HCT116 (cell line): ENCODE measurements at regions of chr15 and their contacts with region 1.

Region 1: GRCh38 chr15:37995461-37996347 is 61.3 kb downstream of the TMCO5A start:
- DNase-seq: peak; percentile 45
- ATAC-seq: peak; percentile 78
- H3K4me3 ChIP-seq: no peak overlapping the region
- H3K27ac ChIP-seq: no peak overlapping the region
- H3K4me1 ChIP-seq: no peaks in the 10 kb centered on the region
- H3K27me3 ChIP-seq: 0 out of 2 replicates have a peak, but pooled peaks cover 13% of the 10 kb centered on the region
- CTCF ChIP-seq: peak; percentile 42 to 76 (median 49); a peak in 4 of 6 replicates
- POLR2A ChIP-seq: no peak
- RAD21 ChIP-seq: peak; percentile 74

Region 2: DNA sequence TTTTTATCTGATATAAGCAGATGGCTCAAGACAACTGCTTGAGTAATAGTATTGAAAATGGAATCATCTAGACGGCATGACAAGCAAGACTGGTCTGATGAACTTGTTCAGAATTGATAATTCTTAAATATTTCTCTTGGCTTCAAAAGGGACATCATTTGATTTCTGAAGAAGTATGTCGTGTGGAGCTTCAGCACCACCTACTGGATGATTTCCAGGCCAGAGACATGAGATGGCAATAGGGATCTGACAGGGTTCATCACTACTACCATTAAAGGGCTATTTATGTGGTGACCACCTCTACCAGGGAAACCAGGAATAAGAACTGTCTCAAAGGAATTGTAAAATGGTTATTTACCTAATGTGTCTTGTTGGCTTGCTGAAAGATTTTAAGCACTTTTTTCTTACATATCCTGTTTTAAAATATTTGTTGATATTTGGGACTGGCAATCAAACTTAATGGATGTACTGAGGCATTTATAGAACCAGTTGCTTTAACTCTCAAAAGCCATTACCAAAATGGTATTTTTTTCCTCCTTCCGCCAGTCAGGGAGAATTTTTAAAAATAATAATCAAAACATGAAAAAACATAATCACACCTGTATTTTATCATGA is 358.7 kb after region 1 on chr15:
- CTCF ChIA-PET with region 1: interaction called, 9 read pairs
- POLR2A ChIA-PET with region 1: interaction called, 3 read pairs
- RAD21 ChIA-PET with region 1: no interaction called
- intact Hi-C with region 1: loop called (anchors 2 kb)
- DNase-seq: peak; percentile 65
- ATAC-seq: peak; percentile 78
- H3K4me3 ChIP-seq: no peak overlapping the region
- H3K27ac ChIP-seq: no peak overlapping the region
- H3K4me1 ChIP-seq: no peaks in the 10 kb centered on the region
- H3K27me3 ChIP-seq: no peaks in the 10 kb centered on the region
- CTCF ChIP-seq: peak; percentile 41 to 87 (median 77); a peak in 5 of 6 replicates
- POLR2A ChIP-seq: no peak
- RAD21 ChIP-seq: peak; percentile 75

Region 3: DNA sequence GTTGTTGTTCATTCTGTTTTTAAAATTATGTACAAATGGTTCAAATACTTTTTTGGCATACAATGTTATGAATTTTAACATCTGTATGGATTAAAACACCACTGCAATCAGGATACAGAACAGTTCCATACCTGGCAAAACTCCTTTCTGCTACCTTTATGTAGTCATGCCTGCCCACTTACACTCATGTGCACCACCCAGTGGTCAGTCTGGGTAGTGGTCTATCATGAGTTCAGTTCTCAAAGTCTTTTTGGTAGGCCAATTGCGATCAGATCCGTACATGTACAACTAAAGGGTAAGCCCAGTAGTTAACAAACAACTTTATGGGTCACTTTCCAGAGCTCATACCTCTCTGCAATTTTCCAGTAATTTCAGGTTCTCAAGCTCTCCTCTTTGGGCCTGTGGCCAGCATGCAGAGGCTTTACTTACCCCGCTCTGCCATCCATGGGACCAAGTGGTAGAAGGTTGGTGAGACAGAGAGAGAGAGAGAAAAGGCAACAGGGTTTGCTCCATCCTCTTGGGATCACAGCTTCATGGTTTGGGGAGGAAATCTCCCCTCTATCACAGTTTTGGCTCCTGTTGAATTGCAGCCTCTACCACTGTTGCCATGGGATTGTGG is 394.3 kb after region 1 on chr15:
- CTCF ChIA-PET with region 1: interaction called, 10 read pairs
- POLR2A ChIA-PET with region 1: no interaction called
- RAD21 ChIA-PET with region 1: interaction called in 1 of 2 experiments, 4 read pairs
- intact Hi-C with region 1: loop called (anchors 1 kb)
- DNase-seq: peak; percentile 37
- ATAC-seq: peak; percentile 91
- H3K4me3 ChIP-seq: no peak overlapping the region
- H3K27ac ChIP-seq: no peak overlapping the region
- H3K4me1 ChIP-seq: no peaks in the 10 kb centered on the region
- H3K27me3 ChIP-seq: no peaks in the 10 kb centered on the region
- CTCF ChIP-seq: peak; percentile 32 to 90 (median 88); a peak in 5 of 6 replicates
- POLR2A ChIP-seq: no peak
- RAD21 ChIP-seq: peak; percentile 62

Region 4: GRCh38 chr15:38414357-38414756 is 418.7 kb after region 1 on chr15:
- CTCF ChIA-PET with region 1: interaction called, 7 read pairs
- POLR2A ChIA-PET with region 1: no interaction called
- RAD21 ChIA-PET with region 1: interaction called, 3 to 7 read pairs
- intact Hi-C with region 1: loop called (anchors 2 kb)
- DNase-seq: peak; percentile 23
- ATAC-seq: peak; percentile 98
- H3K4me3 ChIP-seq: no peak overlapping the region
- H3K27ac ChIP-seq: no peak overlapping the region
- H3K4me1 ChIP-seq: no peaks in the 10 kb centered on the region
- H3K27me3 ChIP-seq: peaks cover 13% of the 10 kb centered on the region; the same call in 1 of the 2 replicates
- CTCF ChIP-seq: peak; percentile 40 to 70 (median 66); a peak in 5 of 6 replicates
- POLR2A ChIP-seq: no peak
- RAD21 ChIP-seq: peak; percentile 70

Region 5: DNA sequence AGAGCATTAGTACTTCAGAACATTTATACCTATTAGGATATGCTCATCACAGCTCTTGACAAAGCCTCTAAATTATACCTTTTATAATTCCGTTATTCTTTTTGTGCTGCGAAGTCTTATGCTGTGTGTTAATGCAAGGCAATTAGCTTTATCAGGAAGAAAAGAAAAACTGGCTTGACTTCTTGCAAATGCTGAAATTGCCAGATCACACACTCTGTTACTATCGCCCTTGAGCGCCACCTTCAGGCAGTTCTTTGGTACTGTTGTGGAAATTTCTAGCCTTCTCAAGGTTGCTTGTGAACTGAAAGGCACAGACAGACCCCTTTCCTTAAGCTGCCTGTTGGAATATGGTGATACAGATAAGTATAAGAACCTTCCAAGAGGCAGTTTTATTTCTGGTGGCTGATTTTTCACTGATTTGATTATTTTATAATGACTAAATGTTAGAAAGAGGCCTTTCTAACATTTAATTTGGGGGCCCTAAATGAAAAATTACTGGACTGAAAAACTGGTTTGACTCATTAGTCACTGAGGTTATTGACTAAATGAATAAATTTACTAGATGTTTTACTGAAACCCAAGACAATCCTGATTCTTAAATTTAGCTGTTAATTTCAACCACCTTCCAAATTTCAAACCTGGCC is 695.1 kb after region 1 on chr15:
- CTCF ChIA-PET with region 1: interaction called, 12 read pairs
- POLR2A ChIA-PET with region 1: no interaction called
- RAD21 ChIA-PET with region 1: no interaction called
- intact Hi-C with region 1: loop called (anchors 5 kb)
- DNase-seq: peak; percentile 61
- ATAC-seq: peak; percentile 82
- H3K4me3 ChIP-seq: no peak overlapping the region
- H3K27ac ChIP-seq: no peak overlapping the region
- H3K4me1 ChIP-seq: peaks cover 0 to 10% of the 10 kb centered on the region in 2 experiments; a peak in 1 of 4 replicates
- H3K27me3 ChIP-seq: no peaks in the 10 kb centered on the region
- CTCF ChIP-seq: peak; percentile 27 to 88 (median 82); a peak in 5 of 6 replicates
- POLR2A ChIP-seq: no peak
- RAD21 ChIP-seq: peak; percentile 43

Region 6: GRCh38 chr15:38699633-38700230 is 704.0 kb after region 1 on chr15:
- CTCF ChIA-PET with region 1: interaction called, 44 read pairs
- POLR2A ChIA-PET with region 1: no interaction called
- RAD21 ChIA-PET with region 1: no interaction called
- intact Hi-C with region 1: loop called (anchors 5 kb)
- DNase-seq: peak; percentile 54
- ATAC-seq: peak; percentile 89
- H3K4me3 ChIP-seq: no peak overlapping the region
- H3K27ac ChIP-seq: no peak overlapping the region
- H3K4me1 ChIP-seq: peaks cover 3 to 10% of the 10 kb centered on the region in 2 experiments; a peak in 1 of 4 replicates
- H3K27me3 ChIP-seq: no peaks in the 10 kb centered on the region
- CTCF ChIP-seq: peak; percentile 37 to 93 (median 92); a peak in 5 of 6 replicates
- POLR2A ChIP-seq: no peak
- RAD21 ChIP-seq: peak; percentile 51